Activated CD8-positive, alpha-beta T cell treated with anti-CD3 and anti-CD28 coated beads, Interleukin-2, amount 10 ng/mL, durations not matched to agents 7 days and 5 days (primary cell): ENCODE measurements at regions of chr10 and their contacts with region 1.

Region 1: DNA sequence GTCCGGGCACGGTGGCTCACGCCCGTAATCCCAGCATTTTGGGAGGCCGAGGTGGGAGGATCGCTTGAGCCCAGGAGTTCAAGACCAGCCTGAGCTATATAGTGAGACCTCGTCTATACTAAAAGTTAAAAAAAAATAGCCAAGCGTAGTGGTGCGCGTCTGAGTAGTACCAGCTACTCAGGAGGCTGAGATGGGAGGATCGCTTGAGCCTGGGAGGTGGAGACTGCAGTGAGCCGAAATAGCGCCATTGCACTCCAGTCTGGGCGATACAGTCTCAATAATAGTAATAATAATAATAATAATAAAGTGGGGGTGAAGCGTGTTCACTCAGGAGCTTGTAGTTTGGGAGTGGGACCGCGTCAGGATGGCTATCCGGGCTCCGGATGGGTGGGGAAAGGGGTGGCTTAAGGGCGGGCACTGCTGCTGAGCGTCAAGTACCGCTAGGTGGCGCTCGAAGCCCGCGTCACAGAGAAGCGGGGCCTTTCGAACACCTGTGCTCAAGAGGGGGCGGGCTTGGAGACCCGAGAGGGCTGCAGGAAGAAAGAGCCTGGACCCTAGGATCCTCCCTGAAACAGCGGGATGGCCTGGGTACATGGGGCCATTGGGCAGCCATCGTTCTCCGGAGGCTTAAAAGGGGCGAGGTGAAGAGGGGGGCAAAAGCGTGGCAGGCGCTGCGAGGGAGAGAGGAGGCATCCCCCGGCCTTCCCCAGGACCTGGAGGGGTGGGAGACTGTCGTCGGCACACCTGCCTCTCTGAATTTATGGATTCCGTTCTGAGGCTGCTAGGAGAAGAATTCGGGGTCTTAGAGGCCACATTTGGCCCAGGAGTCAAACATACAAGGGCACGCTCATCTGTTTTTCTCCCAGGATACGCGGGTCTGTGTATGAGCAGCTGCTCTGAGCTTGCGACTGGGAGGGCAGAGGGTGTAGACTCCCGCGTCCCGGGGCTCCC is 14.5 kb downstream of the LBX1 start:
- DNase-seq: peak; percentile 80
- ATAC-seq: peak; percentile 84
- H3K4me3 Mint-ChIP-seq: no peak overlapping the region
- H3K27ac Mint-ChIP-seq: no peak overlapping the region
- H3K4me1 Mint-ChIP-seq: peaks cover 24% of the 10 kb centered on the region
- H3K27me3 Mint-ChIP-seq: peaks cover 68% of the 10 kb centered on the region

Region 2: GRCh38 chr10:101230183-101230917 is 15.6 kb after region 1 on chr10:
- CTCF ChIA-PET with region 1: interaction called, 10 read pairs
- POLR2A ChIA-PET with region 1: no interaction called
- DNase-seq: no peak
- ATAC-seq: no peak
- H3K4me3 Mint-ChIP-seq: no peak overlapping the region
- H3K27ac Mint-ChIP-seq: no peak overlapping the region
- H3K4me1 Mint-ChIP-seq: peaks cover 18% of the 10 kb centered on the region
- H3K27me3 Mint-ChIP-seq: peaks cover 78% of the 10 kb centered on the region

Region 3: GRCh38 chr10:101291331-101292193 is 76.8 kb after region 1 on chr10:
- CTCF ChIA-PET with region 1: interaction called, 24 read pairs
- POLR2A ChIA-PET with region 1: no interaction called
- DNase-seq: peak; percentile 55
- ATAC-seq: peak; percentile 68
- H3K4me3 Mint-ChIP-seq: peak overlapping the region; percentile 39
- H3K27ac Mint-ChIP-seq: no peak overlapping the region
- H3K4me1 Mint-ChIP-seq: no peaks in the 10 kb centered on the region
- H3K27me3 Mint-ChIP-seq: peaks cover 70% of the 10 kb centered on the region

Region 4: GRCh38 chr10:101453791-101454718 is 239.3 kb after region 1 on chr10:
- CTCF ChIA-PET with region 1: interaction called, 10 read pairs
- POLR2A ChIA-PET with region 1: no interaction called
- DNase-seq: peak; percentile 26
- ATAC-seq: peak; percentile 61
- H3K4me3 Mint-ChIP-seq: no peak overlapping the region
- H3K27ac Mint-ChIP-seq: no peak overlapping the region
- H3K4me1 Mint-ChIP-seq: peaks cover 15% of the 10 kb centered on the region
- H3K27me3 Mint-ChIP-seq: peaks cover 39% of the 10 kb centered on the region

Region 5: GRCh38 chr10:101506829-101507661 is 292.3 kb after region 1 on chr10:
- CTCF ChIA-PET with region 1: interaction called, 11 read pairs
- POLR2A ChIA-PET with region 1: no interaction called
- DNase-seq: no peak
- ATAC-seq: no peak
- H3K4me3 Mint-ChIP-seq: no peak overlapping the region
- H3K27ac Mint-ChIP-seq: no peak overlapping the region
- H3K4me1 Mint-ChIP-seq: no peaks in the 10 kb centered on the region
- H3K27me3 Mint-ChIP-seq: peaks cover 6% of the 10 kb centered on the region

Region 6: GRCh38 chr10:101782811-101783735 is 568.4 kb after region 1 on chr10 and contains the start of gene NPM3:
- CTCF ChIA-PET with region 1: interaction called, 36 read pairs
- POLR2A ChIA-PET with region 1: no interaction called
- DNase-seq: peak; percentile 92
- ATAC-seq: peak; percentile 84
- H3K4me3 Mint-ChIP-seq: peak within 1 kb of the TSS; percentile 100
- H3K27ac Mint-ChIP-seq: peak within 1 kb of the TSS; percentile 98
- H3K4me1 Mint-ChIP-seq: peaks cover 57% of the 10 kb centered on the region
- H3K27me3 Mint-ChIP-seq: peaks cover 5% of the 10 kb centered on the region
- total RNA-seq, gene NPM3: 49.7 to 58.3 TPM